ENCODE measurements at regions of chr2 and their contacts with region 1.

Region 1: GRCh38 chr2:196293751-196294512 is 122.6 kb upstream of the STK17B start:
- DNase-seq: no peak

Region 2: GRCh38 chr2:196413821-196414274 is 119.9 kb after region 1 on chr2:
- CTCF ChIA-PET with region 1: no interaction called
- POLR2A ChIA-PET with region 1: no interaction called
- DNase-seq: no peak

Region 3: DNA sequence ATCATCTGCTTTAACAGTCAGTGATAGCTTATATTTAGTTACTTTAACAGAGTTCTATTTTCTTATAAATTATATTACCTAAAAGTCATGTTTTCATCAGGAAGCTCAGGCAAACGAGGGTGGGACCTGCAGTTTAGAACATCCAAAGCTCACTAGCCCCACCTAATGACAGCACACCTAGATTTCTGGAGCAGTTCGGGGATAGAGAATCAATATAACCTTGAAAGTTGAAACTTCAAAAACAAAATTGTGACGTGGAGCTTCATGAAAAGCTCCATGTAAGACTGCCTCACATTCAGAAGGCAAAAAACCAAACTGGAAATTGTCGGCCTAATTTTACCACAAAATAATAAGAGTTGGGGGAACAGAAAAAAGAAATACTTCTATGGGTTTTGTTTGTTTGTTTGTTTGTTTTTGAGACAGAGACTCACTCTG is 159.7 kb after region 1 on chr2:
- CTCF ChIA-PET with region 1: interaction called, 12 read pairs
- POLR2A ChIA-PET with region 1: no interaction called
- DNase-seq: peak; percentile 38